ENCODE measurements at regions of chr16 and their contacts with region 1.

Region 1: DNA sequence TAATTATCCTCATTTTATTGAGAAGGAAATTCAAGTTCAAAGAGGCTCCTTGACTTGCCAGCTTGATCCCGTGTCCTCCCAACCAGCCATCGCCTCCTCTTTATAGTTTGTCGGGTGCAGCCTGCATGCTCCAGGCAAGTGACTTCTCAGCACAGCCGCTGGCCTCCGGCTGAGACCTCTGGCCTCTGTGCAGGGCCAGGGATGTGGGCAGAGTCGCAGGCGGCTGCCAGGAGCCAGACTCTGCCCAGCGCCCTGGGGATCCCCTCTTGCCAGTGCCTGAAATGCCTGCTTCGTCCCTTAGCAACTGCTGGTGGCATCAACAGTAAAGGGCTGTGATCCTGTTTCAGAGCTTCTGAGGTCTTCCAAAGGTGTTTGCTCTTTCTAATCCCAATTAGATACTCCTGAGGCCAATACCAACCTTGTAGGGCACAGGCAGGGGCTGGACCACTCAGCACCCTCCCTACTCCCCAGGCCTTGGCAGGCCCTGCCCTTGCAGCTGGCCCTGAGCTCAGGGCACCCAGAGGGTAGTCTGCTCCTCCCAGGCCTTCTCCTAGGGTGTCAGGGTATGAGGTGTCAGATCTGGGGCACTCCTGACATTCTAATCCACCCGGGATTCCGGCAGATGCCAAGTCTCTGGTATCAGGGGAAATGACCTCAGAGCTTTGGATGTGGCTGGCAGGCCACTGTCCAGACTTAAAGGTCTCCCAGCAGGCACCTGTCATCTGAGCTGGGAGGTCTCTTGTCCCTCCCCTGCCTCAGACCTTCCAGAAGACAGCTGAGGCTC is 68.0 kb upstream of the SIAH1 start:
- DNase-seq: no peak
- ATAC-seq: no peak
- H3K4me3 Mint-ChIP-seq: no peak overlapping the region
- H3K27ac Mint-ChIP-seq: no peak overlapping the region
- H3K4me1 Mint-ChIP-seq: peaks cover 2% of the 10 kb centered on the region
- H3K27me3 Mint-ChIP-seq: peaks cover 16% of the 10 kb centered on the region

Region 2: GRCh38 chr16:48385272-48386150 is 67.7 kb before region 1 on chr16 and contains the start of gene SIAH1:
- CTCF ChIA-PET with region 1: no interaction called
- POLR2A ChIA-PET with region 1: no interaction called
- intact Hi-C with region 1: loop called in 1 of 2 experiments (anchors 1 kb)
- DNase-seq: peak; percentile 91
- ATAC-seq: peak; percentile 82
- H3K4me3 Mint-ChIP-seq: peak within 1 kb of the TSS; percentile 85
- H3K27ac Mint-ChIP-seq: peak within 1 kb of the TSS; percentile 90
- H3K4me1 Mint-ChIP-seq: peaks cover 21% of the 10 kb centered on the region
- H3K27me3 Mint-ChIP-seq: no peaks in the 10 kb centered on the region
- total RNA-seq, gene SIAH1: 13.1 to 13.3 TPM

Region 3: GRCh38 chr16:48413272-48413671 is 39.9 kb before region 1 on chr16:
- CTCF ChIA-PET with region 1: no interaction called
- POLR2A ChIA-PET with region 1: no interaction called
- intact Hi-C with region 1: loop called in 1 of 2 experiments (anchors 1 kb)
- DNase-seq: no peak
- ATAC-seq: no peak
- H3K4me3 Mint-ChIP-seq: no peak overlapping the region
- H3K27ac Mint-ChIP-seq: no peak overlapping the region
- H3K4me1 Mint-ChIP-seq: peaks cover 8% of the 10 kb centered on the region
- H3K27me3 Mint-ChIP-seq: peaks cover 2% of the 10 kb centered on the region

Region 4: DNA sequence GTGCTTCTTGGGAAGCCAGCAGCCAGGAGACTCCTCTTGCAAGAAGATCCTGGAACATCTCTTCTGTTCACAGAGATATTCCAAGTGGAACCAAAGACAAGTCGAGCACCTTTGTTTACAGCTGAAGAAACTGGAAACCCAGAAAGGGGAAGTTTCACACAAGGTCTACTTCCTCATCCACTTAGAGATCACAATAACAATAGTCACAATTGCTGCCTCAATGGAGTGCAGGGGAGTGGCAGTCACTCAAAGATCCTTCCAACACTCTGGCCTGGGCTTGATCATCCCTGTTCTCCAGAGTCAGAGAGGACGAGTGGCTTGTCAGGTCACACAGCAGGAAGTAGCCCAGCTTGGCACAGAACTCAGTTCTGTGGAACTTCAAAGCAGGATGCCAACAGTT is 21.0 kb before region 1 on chr16:
- CTCF ChIA-PET with region 1: no interaction called
- POLR2A ChIA-PET with region 1: no interaction called
- intact Hi-C with region 1: no loop called
- DNase-seq: no peak
- ATAC-seq: no peak
- H3K4me3 Mint-ChIP-seq: no peak overlapping the region
- H3K27ac Mint-ChIP-seq: no peak overlapping the region
- H3K4me1 Mint-ChIP-seq: peaks cover 2% of the 10 kb centered on the region
- H3K27me3 Mint-ChIP-seq: no peaks in the 10 kb centered on the region

Region 5: GRCh38 chr16:48556913-48557351 is 103.8 kb after region 1 on chr16:
- CTCF ChIA-PET with region 1: no interaction called
- POLR2A ChIA-PET with region 1: no interaction called
- intact Hi-C with region 1: loop called (anchors 1 to 2 kb)
- DNase-seq: peak; percentile 52
- ATAC-seq: peak; percentile 89
- H3K4me3 Mint-ChIP-seq: no peak overlapping the region
- H3K27ac Mint-ChIP-seq: peak overlapping the region; percentile 64
- H3K4me1 Mint-ChIP-seq: peaks cover 83% of the 10 kb centered on the region
- H3K27me3 Mint-ChIP-seq: no peaks in the 10 kb centered on the region

Region 6: DNA sequence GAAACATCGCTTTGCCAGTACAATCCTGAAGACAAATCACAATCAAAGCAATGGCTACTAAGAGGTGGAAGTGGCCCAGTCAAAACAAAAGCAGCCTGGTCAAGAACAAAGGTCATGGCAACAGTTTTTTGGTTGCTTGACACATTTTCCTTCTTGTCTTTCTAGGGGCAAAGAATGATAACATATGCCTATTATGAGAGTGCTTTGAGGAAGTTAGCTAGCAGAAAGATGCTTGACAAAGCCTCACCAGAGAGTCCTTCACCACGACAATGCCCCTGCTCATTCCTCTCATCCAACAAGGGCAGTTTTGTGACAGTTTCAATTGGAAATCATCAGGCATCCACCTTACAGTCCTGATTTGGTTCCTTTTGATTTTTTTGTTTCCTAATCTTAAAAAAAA is 188.6 kb after region 1 on chr16:
- CTCF ChIA-PET with region 1: no interaction called
- POLR2A ChIA-PET with region 1: no interaction called
- intact Hi-C with region 1: no loop called
- DNase-seq: no peak
- ATAC-seq: no peak
- H3K4me3 Mint-ChIP-seq: no peak overlapping the region
- H3K27ac Mint-ChIP-seq: no peak overlapping the region
- H3K4me1 Mint-ChIP-seq: no peaks in the 10 kb centered on the region
- H3K27me3 Mint-ChIP-seq: peaks cover 6% of the 10 kb centered on the region

Measured in activated CD4-positive, alpha-beta T cell treated with anti-CD3 and anti-CD28 coated beads for 36 hours (primary cell).